ENCODE measurements at regions of chr4 and their contacts with region 1.

Region 1: GRCh38 chr4:102564399-102565059 is 63.4 kb downstream of the NFKB1 start:
- DNase-seq: no peak
- H3K4me3 Mint-ChIP-seq: no peak overlapping the region
- H3K27ac Mint-ChIP-seq: peak overlapping the region; percentile 62
- H3K4me1 Mint-ChIP-seq: peaks cover 69% of the 10 kb centered on the region
- H3K27me3 Mint-ChIP-seq: no peaks in the 10 kb centered on the region

Region 2: GRCh38 chr4:102404431-102405028 is 160.0 kb before region 1 on chr4:
- intact Hi-C with region 1: no loop called
- DNase-seq: no peak
- H3K4me3 Mint-ChIP-seq: no peak overlapping the region
- H3K27ac Mint-ChIP-seq: no peak overlapping the region
- H3K4me1 Mint-ChIP-seq: peaks cover 9% of the 10 kb centered on the region
- H3K27me3 Mint-ChIP-seq: peaks cover 6% of the 10 kb centered on the region

Region 3: GRCh38 chr4:102525097-102525496 is 39.4 kb before region 1 on chr4:
- intact Hi-C with region 1: loop called (anchors 2 kb)
- DNase-seq: no peak
- H3K4me3 Mint-ChIP-seq: no peak overlapping the region
- H3K27ac Mint-ChIP-seq: peak overlapping the region; percentile 53
- H3K4me1 Mint-ChIP-seq: peaks cover 83% of the 10 kb centered on the region
- H3K27me3 Mint-ChIP-seq: no peaks in the 10 kb centered on the region

Region 4: DNA sequence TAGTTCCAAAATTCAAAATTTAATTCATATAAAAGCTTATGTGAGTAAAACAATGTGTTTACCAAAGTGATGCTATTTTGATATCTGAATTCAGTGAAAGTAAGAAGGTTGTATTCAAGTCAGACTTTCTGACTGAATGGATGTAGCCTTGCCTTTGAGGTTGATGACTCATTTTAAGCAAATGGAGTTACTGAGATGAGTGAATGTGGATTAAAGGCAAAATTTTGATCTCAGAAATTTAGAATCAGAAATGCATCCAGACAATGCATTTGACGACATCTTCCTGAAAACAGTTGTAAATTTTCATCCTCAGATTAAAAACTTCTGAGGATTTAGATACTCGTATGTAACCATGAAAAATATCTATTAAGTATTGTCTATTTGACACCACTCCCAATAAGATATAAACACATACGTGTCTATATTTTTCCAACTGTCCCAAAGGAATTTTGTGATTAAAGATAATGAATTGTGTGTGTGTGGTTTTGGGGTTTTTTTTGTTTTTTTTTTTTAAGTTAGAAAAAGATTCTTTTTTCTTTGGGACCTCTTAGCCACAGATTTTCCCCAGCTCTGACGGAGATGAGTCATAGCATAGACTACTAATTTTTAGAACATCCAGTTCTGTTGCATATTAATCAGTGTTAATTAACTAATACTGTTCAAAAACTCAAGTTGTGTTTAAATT is 29.0 kb before region 1 on chr4:
- intact Hi-C with region 1: loop called (anchors 1 kb)
- DNase-seq: no peak
- H3K4me3 Mint-ChIP-seq: peak overlapping the region; percentile 5
- H3K27ac Mint-ChIP-seq: peak overlapping the region; percentile 55
- H3K4me1 Mint-ChIP-seq: peaks cover 54% of the 10 kb centered on the region
- H3K27me3 Mint-ChIP-seq: no peaks in the 10 kb centered on the region

Region 5: DNA sequence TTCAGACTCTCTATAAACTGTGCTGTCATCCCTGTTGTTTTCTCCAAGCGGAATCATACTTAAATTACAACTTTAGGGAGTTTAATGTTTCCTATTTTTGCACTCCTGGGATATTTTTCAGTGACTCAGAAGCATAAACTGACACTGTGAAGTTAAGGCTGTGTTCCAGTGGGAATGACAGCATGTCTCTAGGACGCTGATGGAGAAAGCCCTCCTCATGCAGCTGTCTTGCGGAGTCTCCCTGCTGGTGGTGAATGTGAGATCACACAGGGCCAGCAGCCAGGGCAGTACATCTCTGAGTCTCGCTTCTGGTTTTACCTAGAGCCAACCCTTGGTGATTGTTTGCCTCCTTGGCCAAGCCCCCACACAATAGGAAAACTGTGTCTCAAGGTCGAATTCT is 10.0 kb before region 1 on chr4:
- intact Hi-C with region 1: loop called (anchors 1 kb)
- DNase-seq: no peak
- H3K4me3 Mint-ChIP-seq: no peak overlapping the region
- H3K27ac Mint-ChIP-seq: no peak overlapping the region
- H3K4me1 Mint-ChIP-seq: peaks cover 47% of the 10 kb centered on the region
- H3K27me3 Mint-ChIP-seq: no peaks in the 10 kb centered on the region

Region 6: DNA sequence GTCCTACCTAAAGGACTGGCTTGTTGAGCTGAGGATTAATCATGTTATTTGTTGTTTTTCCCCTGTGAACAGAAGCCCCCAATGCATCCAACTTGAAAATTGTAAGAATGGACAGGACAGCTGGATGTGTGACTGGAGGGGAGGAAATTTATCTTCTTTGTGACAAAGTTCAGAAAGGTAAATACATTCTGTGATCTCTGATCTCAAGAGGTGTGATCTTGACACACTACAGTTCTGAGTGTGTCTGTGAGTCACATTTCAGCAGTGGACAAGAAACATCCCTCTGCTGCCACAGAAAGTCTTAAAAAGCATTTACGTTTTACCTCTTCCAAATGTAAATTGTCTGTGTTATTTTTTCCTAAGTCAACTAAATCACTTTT is 15.9 kb after region 1 on chr4:
- intact Hi-C with region 1: loop called (anchors 2 kb)
- DNase-seq: no peak
- H3K4me3 Mint-ChIP-seq: no peak overlapping the region
- H3K27ac Mint-ChIP-seq: peak overlapping the region; percentile 28
- H3K4me1 Mint-ChIP-seq: peaks cover 54% of the 10 kb centered on the region
- H3K27me3 Mint-ChIP-seq: no peaks in the 10 kb centered on the region

Region 7: GRCh38 chr4:102598086-102598761 is 33.7 kb after region 1 on chr4:
- intact Hi-C with region 1: loop called (anchors 5 kb)
- DNase-seq: no peak
- H3K4me3 Mint-ChIP-seq: peak overlapping the region; percentile 57
- H3K27ac Mint-ChIP-seq: peak overlapping the region; percentile 89
- H3K4me1 Mint-ChIP-seq: peaks cover 64% of the 10 kb centered on the region
- H3K27me3 Mint-ChIP-seq: no peaks in the 10 kb centered on the region

Region 8: GRCh38 chr4:102620697-102621497 is 56.4 kb after region 1 on chr4:
- intact Hi-C with region 1: loop called (anchors 5 kb)
- DNase-seq: no peak
- H3K4me3 Mint-ChIP-seq: no peak overlapping the region
- H3K27ac Mint-ChIP-seq: peak overlapping the region; percentile 58
- H3K4me1 Mint-ChIP-seq: peaks cover 49% of the 10 kb centered on the region
- H3K27me3 Mint-ChIP-seq: no peaks in the 10 kb centered on the region

Region 9: GRCh38 chr4:102717448-102718092 is 153.0 kb after region 1 on chr4:
- intact Hi-C with region 1: no loop called
- DNase-seq: no peak
- H3K4me3 Mint-ChIP-seq: no peak overlapping the region
- H3K27ac Mint-ChIP-seq: no peak overlapping the region
- H3K4me1 Mint-ChIP-seq: peaks cover 6% of the 10 kb centered on the region
- H3K27me3 Mint-ChIP-seq: no peaks in the 10 kb centered on the region